Activated CD4-positive, alpha-beta T cell treated with anti-CD3 and anti-CD28 coated beads, Interleukin-2, amount 10 ng/mL, durations not matched to agents 24 days and 14 days (primary cell): ENCODE measurements at regions of chr5 and their contacts with region 1.

Region 1: GRCh38 chr5:134225618-134226440 is at the start of gene PPP2CA:
- DNase-seq: peak; percentile 100
- H3K4me3 Mint-ChIP-seq: peak within 1 kb of the TSS; percentile 97
- H3K27ac Mint-ChIP-seq: peak within 1 kb of the TSS; percentile 100
- H3K4me1 Mint-ChIP-seq: peaks cover 42% of the 10 kb centered on the region
- H3K27me3 Mint-ChIP-seq: no peaks in the 10 kb centered on the region
- total RNA-seq, gene PPP2CA: 177 and 199 TPM in 2 replicates

Region 2: GRCh38 chr5:133404724-133405123 is 821.1 kb before region 1 on chr5:
- intact Hi-C with region 1: no loop called
- DNase-seq: no peak
- H3K4me3 Mint-ChIP-seq: no peak overlapping the region
- H3K27ac Mint-ChIP-seq: no peak overlapping the region
- H3K4me1 Mint-ChIP-seq: no peaks in the 10 kb centered on the region
- H3K27me3 Mint-ChIP-seq: no peaks in the 10 kb centered on the region

Region 3: DNA sequence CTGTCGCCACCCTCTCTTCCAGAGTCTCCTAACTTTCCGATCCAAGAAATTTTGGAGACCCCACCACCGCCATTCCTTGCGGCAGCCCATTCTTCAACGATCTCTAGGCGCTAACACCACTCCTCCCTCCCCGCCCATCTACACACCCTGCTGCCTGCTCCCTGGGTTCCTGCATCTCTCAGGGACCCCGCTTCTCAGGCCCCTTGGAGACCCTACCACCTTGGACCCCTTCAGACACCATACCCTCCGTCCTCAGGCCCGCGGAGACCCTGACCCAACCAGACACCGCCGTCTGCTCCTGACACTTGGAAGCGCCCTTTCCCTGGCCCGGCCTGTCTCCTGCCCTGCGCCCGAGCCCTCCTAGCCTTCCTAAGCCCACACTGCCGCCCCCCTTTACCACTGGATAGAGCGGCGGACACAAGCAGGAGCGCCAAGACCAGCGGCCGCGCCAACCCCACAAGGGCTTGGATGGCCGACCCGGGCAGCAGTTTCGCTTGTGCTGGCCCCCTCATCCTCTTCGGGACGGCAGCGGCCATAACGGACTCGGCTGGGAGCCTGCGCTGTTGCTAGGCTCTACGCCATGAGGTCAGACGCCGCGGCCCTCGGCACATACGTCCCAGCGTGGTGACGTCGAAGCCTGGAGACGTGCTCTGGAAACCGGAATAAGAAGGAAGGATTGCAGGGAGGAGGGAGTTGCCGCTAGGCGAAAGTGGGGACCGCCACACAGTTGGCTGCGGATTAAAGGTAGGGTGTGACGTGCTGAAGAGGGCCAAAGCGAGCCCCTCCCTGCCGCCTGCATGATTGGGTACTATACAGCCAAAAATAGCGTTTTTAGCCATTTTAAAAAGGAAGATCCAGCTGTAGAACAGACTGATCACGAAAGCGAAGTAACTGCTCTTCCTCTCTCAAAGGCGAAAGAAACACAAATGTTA is 257.5 kb before region 1 on chr5 and contains the start of gene C5orf15:
- intact Hi-C with region 1: loop called (anchors 1 kb)
- DNase-seq: peak; percentile 98
- H3K4me3 Mint-ChIP-seq: peak within 1 kb of the TSS; percentile 98
- H3K27ac Mint-ChIP-seq: peak within 1 kb of the TSS; percentile 95
- H3K4me1 Mint-ChIP-seq: peaks cover 43% of the 10 kb centered on the region
- H3K27me3 Mint-ChIP-seq: no peaks in the 10 kb centered on the region
- total RNA-seq, gene C5orf15: 41.4 and 45.0 TPM in 2 replicates

Region 4: DNA sequence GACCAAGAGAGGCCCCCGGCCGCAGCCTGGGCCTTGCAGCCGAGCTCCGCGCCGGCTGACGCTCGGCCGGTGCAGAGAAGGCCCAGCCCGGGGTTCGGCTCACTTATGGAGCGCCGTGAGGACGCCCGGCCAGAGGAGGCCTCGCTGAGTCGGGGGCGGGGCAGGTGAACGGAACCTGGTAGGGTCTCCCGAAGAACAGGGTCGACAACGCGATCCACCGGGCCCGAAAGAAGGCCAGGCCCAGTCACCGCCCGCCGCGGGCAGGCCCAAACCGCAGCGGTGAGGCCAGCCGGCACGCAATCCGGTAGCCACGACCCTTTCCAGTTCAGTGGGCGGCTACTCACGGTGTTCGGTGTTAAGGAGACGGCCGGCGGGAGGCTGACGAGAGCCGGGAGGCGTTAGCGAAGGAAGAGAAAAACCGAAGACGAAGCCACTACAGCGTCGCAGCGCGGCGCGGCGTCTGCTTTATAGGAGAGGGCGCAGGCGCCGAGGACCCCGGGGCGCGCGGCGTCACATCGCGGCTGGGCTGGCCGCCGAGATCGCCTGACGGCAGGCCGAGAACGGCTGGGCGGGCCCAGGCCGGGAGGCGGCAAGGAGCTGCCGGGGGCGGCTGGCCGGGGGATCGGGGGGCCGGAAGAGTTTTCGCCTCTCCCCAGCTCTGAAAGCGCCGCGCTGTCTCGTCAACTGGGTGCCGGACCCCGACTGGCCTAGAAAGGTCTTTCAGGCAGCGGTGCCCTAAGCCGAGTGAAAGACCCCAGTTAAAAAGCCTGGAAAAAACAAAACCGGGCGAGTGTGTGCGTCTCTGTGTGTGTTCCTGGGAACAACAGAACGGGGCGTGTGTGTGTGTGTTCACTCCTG is 49.1 kb before region 1 on chr5 and contains the start of gene SKP1:
- intact Hi-C with region 1: loop called (anchors 1 kb)
- DNase-seq: peak; percentile 96
- H3K4me3 Mint-ChIP-seq: peak within 1 kb of the TSS; percentile 93
- H3K27ac Mint-ChIP-seq: peak within 1 kb of the TSS; percentile 97
- H3K4me1 Mint-ChIP-seq: peaks cover 21% of the 10 kb centered on the region
- H3K27me3 Mint-ChIP-seq: no peaks in the 10 kb centered on the region
- total RNA-seq, gene SKP1: 266 and 289 TPM in 2 replicates

Region 5: DNA sequence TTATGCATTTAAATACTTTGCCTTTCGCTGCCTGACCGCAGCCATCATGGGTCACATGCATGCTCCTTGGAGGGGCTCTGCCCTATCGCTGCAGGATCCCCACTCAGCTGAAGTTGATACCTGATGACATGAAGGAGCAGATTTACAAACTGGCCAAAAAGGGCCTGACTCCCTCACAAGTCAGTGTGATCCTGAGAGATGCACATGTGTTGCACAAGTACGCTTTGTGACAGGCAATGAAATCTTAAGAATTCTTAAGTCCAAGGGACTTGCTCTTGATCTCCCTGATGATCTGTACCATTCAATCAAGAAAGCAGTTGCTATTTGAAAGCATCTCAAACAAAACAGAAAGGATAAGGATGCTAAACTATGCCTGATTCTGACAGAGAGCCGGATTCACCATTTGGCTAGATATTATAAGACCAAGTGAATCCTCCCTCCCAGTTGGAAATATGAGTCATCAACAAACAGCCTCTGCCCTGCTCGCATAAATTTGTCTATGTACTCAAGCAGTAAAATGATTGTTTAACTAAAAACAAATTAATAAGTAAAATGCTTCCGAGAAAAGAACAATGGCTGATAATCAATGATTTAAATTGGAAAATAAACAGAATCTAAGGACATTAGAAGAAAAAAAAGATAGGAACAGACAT is 41.7 kb after region 1 on chr5:
- intact Hi-C with region 1: no loop called
- DNase-seq: no peak
- H3K4me3 Mint-ChIP-seq: no peak overlapping the region
- H3K27ac Mint-ChIP-seq: no peak overlapping the region
- H3K4me1 Mint-ChIP-seq: no peaks in the 10 kb centered on the region
- H3K27me3 Mint-ChIP-seq: peaks cover 16% of the 10 kb centered on the region

Region 6: DNA sequence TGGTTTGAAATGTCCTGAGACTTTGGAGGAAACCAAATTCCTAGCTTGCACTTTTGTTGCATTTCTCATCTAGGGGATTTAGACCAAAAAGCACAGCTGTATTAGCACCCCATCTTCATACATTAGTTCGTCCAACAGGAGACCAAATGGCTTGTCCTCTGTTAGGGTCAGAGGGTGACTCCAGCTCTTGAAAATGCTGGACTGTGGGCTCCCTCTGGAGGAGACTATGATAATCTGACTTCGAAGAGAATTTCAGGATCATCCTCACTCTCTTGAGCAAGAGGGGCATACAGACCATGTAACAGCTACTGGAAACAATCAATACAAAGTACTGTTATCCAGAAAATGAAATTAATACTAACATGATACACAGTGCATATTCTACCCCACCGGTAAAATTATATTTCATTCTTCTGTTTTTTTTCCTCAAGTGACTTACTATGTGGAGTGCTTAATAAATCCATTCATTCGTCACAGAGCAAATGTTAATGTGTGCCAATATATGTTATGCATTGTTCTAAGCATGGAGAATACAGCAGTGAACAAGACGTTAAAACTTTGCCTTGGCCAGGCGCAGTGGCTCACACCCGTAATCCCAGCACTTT is 63.8 kb after region 1 on chr5:
- intact Hi-C with region 1: loop called (anchors 5 kb)
- DNase-seq: peak; percentile 79
- H3K4me3 Mint-ChIP-seq: no peak overlapping the region
- H3K27ac Mint-ChIP-seq: no peak overlapping the region
- H3K4me1 Mint-ChIP-seq: peaks cover 4% of the 10 kb centered on the region
- H3K27me3 Mint-ChIP-seq: peaks cover 27% of the 10 kb centered on the region

Region 7: DNA sequence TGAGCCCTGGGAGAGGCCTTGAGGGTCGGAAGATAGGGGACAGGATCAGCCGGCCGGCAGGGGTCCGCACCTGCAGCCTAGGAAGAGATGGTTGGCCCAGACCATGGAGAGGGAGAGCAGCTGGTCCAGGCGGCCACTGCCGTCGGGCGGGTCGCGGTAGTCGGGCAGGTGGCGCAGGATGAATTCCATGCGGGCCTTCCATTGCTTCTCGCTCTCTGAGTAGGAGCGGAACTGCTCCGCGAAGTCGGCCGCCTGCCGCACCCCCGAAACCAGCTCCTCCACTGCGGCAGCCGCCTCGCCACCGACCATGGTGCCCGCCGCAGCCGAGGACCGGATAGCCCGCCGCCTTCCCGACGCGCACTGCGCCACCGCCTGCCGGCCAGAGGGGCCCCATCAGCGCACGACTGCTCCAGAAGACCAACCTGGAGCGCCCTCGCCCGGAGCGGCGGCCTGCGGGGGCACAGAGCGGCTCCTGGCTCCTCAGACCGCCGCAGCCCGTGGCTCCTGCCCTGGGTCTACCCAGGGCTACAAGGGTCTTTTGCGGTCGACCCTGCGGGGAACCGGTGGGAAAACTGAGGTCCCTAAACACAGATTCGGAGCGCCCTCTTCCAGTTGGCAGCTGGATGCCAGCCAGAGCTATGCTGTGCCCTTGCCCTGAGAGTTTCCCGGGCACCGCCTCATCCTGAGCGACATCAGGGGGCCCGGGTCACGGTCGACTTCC is 185.9 kb after region 1 on chr5 and contains the start of gene CDKN2AIPNL:
- intact Hi-C with region 1: loop called (anchors 1 kb)
- DNase-seq: peak; percentile 97
- H3K4me3 Mint-ChIP-seq: peak within 1 kb of the TSS; percentile 98
- H3K27ac Mint-ChIP-seq: peak within 1 kb of the TSS; percentile 92
- H3K4me1 Mint-ChIP-seq: peaks cover 24% of the 10 kb centered on the region
- H3K27me3 Mint-ChIP-seq: no peaks in the 10 kb centered on the region
- total RNA-seq, gene CDKN2AIPNL: 32.0 and 34.3 TPM in 2 replicates

Region 8: GRCh38 chr5:134648425-134649162 is 422.8 kb after region 1 on chr5 and contains the start of gene SEC24A:
- intact Hi-C with region 1: loop called (anchors 5 kb)
- DNase-seq: peak; percentile 97
- H3K4me3 Mint-ChIP-seq: peak within 1 kb of the TSS; percentile 94
- H3K27ac Mint-ChIP-seq: peak within 1 kb of the TSS; percentile 97
- H3K4me1 Mint-ChIP-seq: peaks cover 23% of the 10 kb centered on the region
- H3K27me3 Mint-ChIP-seq: no peaks in the 10 kb centered on the region
- total RNA-seq, gene SEC24A: 29.4 and 31.2 TPM in 2 replicates

Region 9: GRCh38 chr5:134758504-134759341 is 532.9 kb after region 1 on chr5 and contains the start of gene DDX46:
- intact Hi-C with region 1: loop called (anchors 5 kb)
- DNase-seq: peak; percentile 99
- H3K4me3 Mint-ChIP-seq: peak within 1 kb of the TSS; percentile 99
- H3K27ac Mint-ChIP-seq: peak within 1 kb of the TSS; percentile 95
- H3K4me1 Mint-ChIP-seq: peaks cover 31% of the 10 kb centered on the region
- H3K27me3 Mint-ChIP-seq: no peaks in the 10 kb centered on the region
- total RNA-seq, gene DDX46: 83.8 and 89.4 TPM in 2 replicates